Endothelial cell of umbilical vein (primary cell): ENCODE measurements at regions of chr15 and their contacts with region 1.

Region 1: GRCh38 chr15:32657198-32657883 is 15.8 kb downstream of the SCG5 start:
- DNase-seq: no peak
- H3K4me3 ChIP-seq: no peak overlapping the region
- H3K27ac ChIP-seq: no peak overlapping the region
- H3K4me1 ChIP-seq: peaks cover 7% of the 10 kb centered on the region
- H3K27me3 ChIP-seq: no peaks in the 10 kb centered on the region
- CTCF ChIP-seq: no peak
- POLR2A ChIP-seq: no peak

Region 2: GRCh38 chr15:32683906-32684584 is 26.7 kb after region 1 on chr15:
- CTCF ChIA-PET with region 1: interaction called, 11 read pairs
- POLR2A ChIA-PET with region 1: no interaction called
- dilution Hi-C with region 1: no loop called
- intact Hi-C with region 1: no loop called
- DNase-seq: peak; percentile 9
- H3K4me3 ChIP-seq: no peak overlapping the region
- H3K27ac ChIP-seq: no peak overlapping the region
- H3K4me1 ChIP-seq: peaks cover 2% of the 10 kb centered on the region
- H3K27me3 ChIP-seq: no peaks in the 10 kb centered on the region
- CTCF ChIP-seq: no peak
- POLR2A ChIP-seq: no peak

Region 3: GRCh38 chr15:32794973-32795372 is 137.6 kb after region 1 on chr15:
- CTCF ChIA-PET with region 1: no interaction called
- POLR2A ChIA-PET with region 1: no interaction called
- dilution Hi-C with region 1: no loop called
- intact Hi-C with region 1: no loop called
- DNase-seq: no peak
- H3K4me3 ChIP-seq: no peak overlapping the region
- H3K27ac ChIP-seq: no peak overlapping the region
- H3K4me1 ChIP-seq: peaks cover 10% of the 10 kb centered on the region
- H3K27me3 ChIP-seq: peaks cover 0 to 2% of the 10 kb centered on the region in 2 experiments
- CTCF ChIP-seq: no peak
- POLR2A ChIP-seq: no peak

Region 4: GRCh38 chr15:32838820-32839219 is 181.5 kb after region 1 on chr15:
- CTCF ChIA-PET with region 1: interaction called, 51 read pairs
- POLR2A ChIA-PET with region 1: no interaction called
- dilution Hi-C with region 1: no loop called
- intact Hi-C with region 1: loop called (anchors 1 kb)
- DNase-seq: peak; percentile 57
- H3K4me3 ChIP-seq: no peak overlapping the region
- H3K27ac ChIP-seq: no peak overlapping the region
- H3K4me1 ChIP-seq: peaks cover 14% of the 10 kb centered on the region
- H3K27me3 ChIP-seq: no peaks in the 10 kb centered on the region
- CTCF ChIP-seq: no peak
- POLR2A ChIP-seq: no peak

Region 5: DNA sequence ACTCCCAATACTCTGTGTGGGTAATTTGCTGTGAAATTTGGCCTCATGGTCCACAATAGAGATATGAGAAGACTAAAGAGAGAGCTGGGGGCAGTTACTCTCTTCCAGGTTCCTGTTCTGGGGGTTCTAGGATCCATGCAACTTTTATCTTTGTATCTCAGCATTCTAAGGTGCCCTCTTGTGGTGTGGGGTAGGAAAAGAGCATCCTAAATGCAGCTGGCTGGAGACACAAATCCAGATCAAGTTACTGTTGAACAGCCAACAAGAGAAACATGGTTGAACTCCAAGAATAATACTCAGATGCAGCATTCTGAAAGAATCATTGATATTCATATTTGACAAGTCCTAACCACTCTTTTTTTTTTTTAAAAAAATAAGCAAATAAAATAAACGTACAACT is 298.7 kb after region 1 on chr15:
- CTCF ChIA-PET with region 1: interaction called, 127 read pairs
- POLR2A ChIA-PET with region 1: no interaction called
- dilution Hi-C with region 1: no loop called
- intact Hi-C with region 1: loop called (anchors 1 kb)
- DNase-seq: peak; percentile 51
- H3K4me3 ChIP-seq: no peak overlapping the region
- H3K27ac ChIP-seq: no peak overlapping the region
- H3K4me1 ChIP-seq: no peaks in the 10 kb centered on the region
- H3K27me3 ChIP-seq: peaks cover 3 to 6% of the 10 kb centered on the region in 2 experiments
- CTCF ChIP-seq: peak; percentile 43 to 46
- POLR2A ChIP-seq: no peak

Region 6: DNA sequence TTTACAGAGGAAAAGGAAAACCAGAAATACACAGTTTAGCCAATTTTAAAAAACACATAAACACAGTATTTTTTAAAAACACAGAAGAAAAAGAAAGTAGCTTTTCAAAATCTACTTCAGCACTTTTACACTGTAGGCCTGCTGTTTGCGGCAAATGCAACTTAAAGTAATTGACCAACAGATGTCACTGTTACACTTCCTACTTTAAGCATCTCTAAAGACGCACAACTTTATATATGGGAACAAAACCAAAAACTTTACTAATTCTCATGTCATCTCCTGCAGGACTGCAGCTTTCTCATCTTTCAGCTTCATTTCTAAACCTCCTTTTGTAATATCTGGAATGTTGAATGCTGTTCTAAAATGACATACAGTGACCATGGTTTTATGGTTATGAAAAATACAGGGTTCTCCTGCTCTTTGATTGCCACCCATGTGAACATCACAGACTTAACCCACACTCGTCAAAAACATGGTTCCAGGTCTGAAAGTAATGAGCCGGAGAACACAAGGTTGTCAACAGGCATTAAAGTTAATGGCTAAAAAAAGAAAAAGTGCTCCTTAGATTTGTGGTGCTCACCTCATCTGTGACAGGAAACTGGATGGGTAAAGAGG is 429.3 kb after region 1 on chr15:
- CTCF ChIA-PET with region 1: interaction called, 8 read pairs
- POLR2A ChIA-PET with region 1: no interaction called
- dilution Hi-C with region 1: no loop called
- intact Hi-C with region 1: loop called (anchors 5 kb)
- DNase-seq: peak; percentile 62
- H3K4me3 ChIP-seq: no peak overlapping the region
- H3K27ac ChIP-seq: no peak overlapping the region
- H3K4me1 ChIP-seq: no peaks in the 10 kb centered on the region
- H3K27me3 ChIP-seq: no peaks in the 10 kb centered on the region
- CTCF ChIP-seq: peak; percentile 35 to 44
- POLR2A ChIP-seq: no peak